ENCODE measurements at regions of chr2 and their contacts with region 1.

Region 1: DNA sequence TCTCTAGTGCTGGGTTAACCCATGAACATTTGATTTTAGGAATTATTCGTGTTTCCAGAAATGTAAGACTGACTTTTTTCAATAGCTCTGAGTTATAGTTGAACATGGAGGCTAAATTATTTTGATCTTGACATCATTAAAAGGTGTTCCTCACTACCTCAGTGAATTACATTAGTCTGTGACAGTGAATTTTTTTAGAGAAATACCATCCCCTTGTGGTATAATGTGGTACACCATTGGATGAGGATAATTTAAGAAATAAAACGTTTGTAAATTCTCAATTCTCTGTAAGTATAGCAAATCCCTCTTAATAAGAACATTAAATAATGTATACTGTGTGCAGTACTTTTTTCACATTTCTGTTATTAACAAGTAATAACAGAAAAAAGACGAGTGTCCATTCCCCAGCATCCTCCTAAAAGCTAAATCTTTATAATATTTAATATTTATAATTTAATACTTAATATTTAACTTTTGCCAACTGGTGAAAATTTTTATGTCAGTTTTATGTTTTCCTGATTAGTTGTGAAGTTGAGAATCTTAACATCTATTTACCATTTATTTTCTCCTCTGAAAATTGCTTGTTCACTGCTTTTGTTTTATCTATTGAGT is 70.3 kb upstream of the CWC22 start:
- DNase-seq: no peak
- H3K4me3 Mint-ChIP-seq: no peak overlapping the region
- H3K27ac Mint-ChIP-seq: no peak overlapping the region
- H3K4me1 Mint-ChIP-seq: no peaks in the 10 kb centered on the region
- H3K27me3 Mint-ChIP-seq: peaks cover 3% of the 10 kb centered on the region

Region 2: GRCh38 chr2:179410552-179411356 is 666.6 kb before region 1 on chr2:
- CTCF ChIA-PET with region 1: no interaction called
- intact Hi-C with region 1: loop called (anchors 5 kb)
- DNase-seq: peak; percentile 45
- H3K4me3 Mint-ChIP-seq: no peak overlapping the region
- H3K27ac Mint-ChIP-seq: no peak overlapping the region
- H3K4me1 Mint-ChIP-seq: no peaks in the 10 kb centered on the region
- H3K27me3 Mint-ChIP-seq: peaks cover 32% of the 10 kb centered on the region

Region 3: GRCh38 chr2:179768765-179769164 is 308.6 kb before region 1 on chr2:
- CTCF ChIA-PET with region 1: no interaction called
- intact Hi-C with region 1: loop called (anchors 10 kb)
- DNase-seq: no peak
- H3K4me3 Mint-ChIP-seq: no peak overlapping the region
- H3K27ac Mint-ChIP-seq: no peak overlapping the region
- H3K4me1 Mint-ChIP-seq: no peaks in the 10 kb centered on the region
- H3K27me3 Mint-ChIP-seq: peaks cover 26% of the 10 kb centered on the region

Region 4: DNA sequence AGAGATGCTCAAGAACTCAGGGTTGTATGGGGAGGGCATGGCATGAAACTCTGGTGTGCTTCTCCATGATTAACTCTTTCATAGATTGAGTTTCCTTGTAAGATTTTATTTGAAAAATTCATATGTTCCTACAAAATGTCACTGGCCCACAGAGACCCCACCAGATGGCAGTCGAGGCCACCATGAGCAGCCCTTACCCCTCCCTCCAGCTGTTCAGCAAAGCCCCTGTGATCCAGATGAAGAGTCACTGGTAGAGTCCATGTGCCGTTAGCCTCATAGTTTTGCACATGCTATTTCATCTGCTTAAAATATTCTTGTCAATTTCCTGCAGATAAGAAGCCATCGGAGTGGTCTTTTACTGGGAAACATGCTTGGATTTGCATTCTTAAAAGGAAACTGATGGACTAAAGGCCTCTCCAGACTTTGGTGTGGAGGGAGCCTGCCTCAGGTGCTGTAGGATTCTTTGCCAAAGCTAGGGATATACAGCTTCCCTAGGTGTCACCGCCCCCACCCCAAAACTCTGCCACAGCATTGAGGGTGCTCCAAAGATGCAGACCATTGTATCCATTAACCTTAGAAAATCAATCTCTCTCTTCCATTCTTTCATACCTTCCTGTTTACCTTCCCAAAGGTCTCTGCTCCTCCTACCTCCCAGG is 234.8 kb before region 1 on chr2:
- CTCF ChIA-PET with region 1: no interaction called
- intact Hi-C with region 1: loop called (anchors 1 kb)
- DNase-seq: peak; percentile 19
- H3K4me3 Mint-ChIP-seq: no peak overlapping the region
- H3K27ac Mint-ChIP-seq: no peak overlapping the region
- H3K4me1 Mint-ChIP-seq: no peaks in the 10 kb centered on the region
- H3K27me3 Mint-ChIP-seq: no peaks in the 10 kb centered on the region